Activated CD8-positive, alpha-beta memory T cell treated with anti-CD3 and anti-CD28 coated beads, Interleukin-2, amount 10 ng/mL, durations not matched to agents 7 days and 5 days (primary cell): ENCODE measurements at regions of chr1 and their contacts with region 1.

Region 1: DNA sequence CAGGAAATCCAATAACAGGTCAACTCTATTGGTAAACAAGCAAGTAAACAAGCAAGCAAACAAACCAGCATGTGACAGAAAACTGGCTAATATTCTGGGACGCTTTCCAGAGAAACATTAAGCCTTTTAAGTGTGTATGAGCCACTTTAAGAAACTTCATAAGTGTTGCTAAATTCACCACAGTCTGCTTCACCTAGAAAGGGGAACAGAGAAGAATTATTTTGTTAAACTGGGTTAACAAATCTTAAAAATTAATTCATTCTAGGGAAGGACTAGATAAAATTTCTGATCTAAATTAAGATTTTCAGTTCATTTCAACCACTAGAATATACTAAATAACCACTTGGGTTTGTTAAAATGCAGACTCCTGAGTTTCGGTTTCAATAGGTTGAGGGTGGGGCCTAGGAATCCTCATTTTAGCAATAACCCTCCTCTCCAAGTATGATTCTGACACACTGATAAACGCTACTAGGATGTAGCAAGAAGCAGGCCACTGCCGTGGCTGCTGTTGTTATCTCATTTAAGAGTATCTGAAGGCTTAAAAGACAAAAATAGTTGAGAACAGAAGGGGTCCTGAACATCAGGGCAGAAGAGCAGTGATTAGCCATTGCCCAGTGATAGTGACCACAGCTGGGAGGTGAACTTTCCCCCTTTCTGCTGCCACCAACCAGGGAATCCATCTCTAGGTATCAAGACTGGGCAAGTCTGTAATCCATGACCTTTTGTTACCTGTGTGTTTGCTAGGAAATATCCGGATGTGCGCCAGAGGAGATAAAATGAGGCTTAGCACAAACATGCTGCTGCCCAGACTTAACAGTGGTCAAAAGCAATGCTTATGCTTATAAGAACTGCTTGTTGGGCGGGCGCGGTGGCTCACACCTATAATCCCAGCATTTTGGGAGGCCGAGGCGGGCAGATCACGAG is 11.2 kb downstream of the CREG1 start:
- DNase-seq: peak; percentile 60
- ATAC-seq: peak; percentile 79
- H3K4me3 Mint-ChIP-seq: peak overlapping the region; percentile 8
- H3K27ac Mint-ChIP-seq: peak overlapping the region; percentile 83
- H3K4me1 Mint-ChIP-seq: peaks cover 59% of the 10 kb centered on the region
- H3K27me3 Mint-ChIP-seq: no peaks in the 10 kb centered on the region

Region 2: GRCh38 chr1:167401260-167401873 is 141.0 kb before region 1 on chr1:
- CTCF ChIA-PET with region 1: interaction called, 18 read pairs
- DNase-seq: peak; percentile 74
- ATAC-seq: peak; percentile 89
- H3K4me3 Mint-ChIP-seq: no peak overlapping the region
- H3K27ac Mint-ChIP-seq: no peak overlapping the region
- H3K4me1 Mint-ChIP-seq: peaks cover 3% of the 10 kb centered on the region
- H3K27me3 Mint-ChIP-seq: no peaks in the 10 kb centered on the region

Region 3: DNA sequence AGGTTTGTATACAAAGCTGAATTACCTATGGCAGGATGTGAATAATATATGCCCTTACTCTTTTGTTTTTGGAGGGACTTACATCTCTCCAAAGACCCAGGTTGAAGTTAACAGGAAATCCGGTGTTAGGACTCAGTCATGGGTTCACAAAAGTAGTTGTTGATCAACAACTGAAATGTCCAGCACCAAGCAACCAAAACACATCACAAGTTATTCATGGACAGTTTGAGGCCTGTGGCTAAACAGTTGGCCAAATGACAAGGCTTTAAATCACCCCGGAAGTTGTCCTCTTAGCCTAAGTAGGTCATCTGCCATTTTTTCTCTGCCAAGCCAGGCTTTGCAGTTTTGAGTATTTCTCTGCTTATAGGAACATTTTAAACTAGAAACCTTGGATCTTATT is 114.0 kb before region 1 on chr1:
- CTCF ChIA-PET with region 1: interaction called, 10 read pairs
- DNase-seq: no peak
- ATAC-seq: no peak
- H3K4me3 Mint-ChIP-seq: no peak overlapping the region
- H3K27ac Mint-ChIP-seq: peak overlapping the region; percentile 72
- H3K4me1 Mint-ChIP-seq: peaks cover 28% of the 10 kb centered on the region
- H3K27me3 Mint-ChIP-seq: no peaks in the 10 kb centered on the region

Region 4: GRCh38 chr1:167454894-167455785 is 87.2 kb before region 1 on chr1:
- CTCF ChIA-PET with region 1: interaction called, 20 read pairs
- DNase-seq: peak; percentile 87
- ATAC-seq: peak; percentile 70
- H3K4me3 Mint-ChIP-seq: peak overlapping the region; percentile 78
- H3K27ac Mint-ChIP-seq: peak overlapping the region; percentile 56
- H3K4me1 Mint-ChIP-seq: peaks cover 62% of the 10 kb centered on the region
- H3K27me3 Mint-ChIP-seq: no peaks in the 10 kb centered on the region

Region 5: DNA sequence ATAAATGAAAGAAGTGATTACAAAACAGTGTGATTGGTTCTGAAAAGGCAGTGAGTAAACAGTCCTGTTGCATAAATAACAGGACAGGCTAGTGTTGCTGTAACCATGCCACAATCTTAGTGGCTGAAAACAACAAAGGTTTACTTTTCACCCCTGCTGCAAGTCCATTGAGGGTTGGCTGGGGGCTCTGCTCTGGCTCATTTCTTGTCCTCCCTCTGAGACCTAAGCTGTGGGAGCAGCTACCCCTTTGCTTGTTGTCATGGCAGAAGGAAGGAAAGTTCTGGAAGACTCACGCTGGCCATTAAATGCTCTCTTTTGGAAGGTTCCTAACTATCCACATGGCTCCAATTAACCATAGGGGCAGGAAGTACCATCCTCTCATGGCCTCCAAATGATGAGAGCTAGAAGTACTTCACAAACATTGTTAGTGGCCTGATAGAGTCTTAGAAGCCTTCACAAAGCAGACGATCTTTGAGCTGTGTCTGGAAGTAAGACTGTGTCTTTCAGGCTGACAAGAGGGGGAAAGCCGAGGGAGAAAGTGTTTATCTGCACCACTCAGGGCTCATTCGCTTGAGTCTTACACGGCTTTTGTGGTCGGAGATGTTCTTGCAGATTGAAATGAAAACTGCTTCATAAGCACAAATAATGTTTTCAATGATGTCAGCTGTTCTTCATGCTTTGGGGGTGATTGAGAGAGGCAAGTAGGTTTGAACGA is 99.6 kb after region 1 on chr1:
- CTCF ChIA-PET with region 1: no interaction called
- DNase-seq: no peak
- ATAC-seq: peak; percentile 35
- H3K4me3 Mint-ChIP-seq: no peak overlapping the region
- H3K27ac Mint-ChIP-seq: peak overlapping the region; percentile 54
- H3K4me1 Mint-ChIP-seq: peaks cover 85% of the 10 kb centered on the region
- H3K27me3 Mint-ChIP-seq: no peaks in the 10 kb centered on the region

Region 6: GRCh38 chr1:167715157-167715999 is 173.0 kb after region 1 on chr1:
- CTCF ChIA-PET with region 1: interaction called, 18 read pairs
- DNase-seq: peak; percentile 93
- ATAC-seq: peak; percentile 57
- H3K4me3 Mint-ChIP-seq: peak overlapping the region; percentile 80
- H3K27ac Mint-ChIP-seq: peak overlapping the region; percentile 93
- H3K4me1 Mint-ChIP-seq: peaks cover 29% of the 10 kb centered on the region
- H3K27me3 Mint-ChIP-seq: peaks cover 15% of the 10 kb centered on the region